Posterior vena cava (tissue), 2 donors: ENCODE measurements at regions of chr3 and their contacts with region 1.

Region 1: DNA sequence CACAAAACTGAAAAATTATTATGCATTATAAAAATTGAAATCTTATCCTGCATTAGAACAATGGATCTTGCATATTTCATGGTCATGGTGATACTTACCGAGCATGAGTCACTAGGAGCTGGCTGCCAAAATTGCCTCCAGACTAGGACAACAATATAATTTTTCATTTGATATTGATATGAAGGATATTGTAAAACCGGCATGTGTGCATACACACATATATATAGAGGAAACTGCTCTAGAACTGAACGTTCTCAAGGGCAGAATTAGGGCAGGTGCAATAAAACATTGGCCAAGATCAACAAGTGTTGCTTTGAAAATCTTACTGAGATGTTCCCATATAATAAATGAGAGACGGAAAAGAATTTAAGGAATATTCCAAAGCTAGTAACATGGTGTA is 319.4 kb upstream of the POU1F1 start:
- DNase-seq: no peak

Region 2: GRCh38 chr3:87621667-87622066 is 25.9 kb after region 1 on chr3:
- intact Hi-C with region 1: no loop called
- DNase-seq: no peak

Region 3: DNA sequence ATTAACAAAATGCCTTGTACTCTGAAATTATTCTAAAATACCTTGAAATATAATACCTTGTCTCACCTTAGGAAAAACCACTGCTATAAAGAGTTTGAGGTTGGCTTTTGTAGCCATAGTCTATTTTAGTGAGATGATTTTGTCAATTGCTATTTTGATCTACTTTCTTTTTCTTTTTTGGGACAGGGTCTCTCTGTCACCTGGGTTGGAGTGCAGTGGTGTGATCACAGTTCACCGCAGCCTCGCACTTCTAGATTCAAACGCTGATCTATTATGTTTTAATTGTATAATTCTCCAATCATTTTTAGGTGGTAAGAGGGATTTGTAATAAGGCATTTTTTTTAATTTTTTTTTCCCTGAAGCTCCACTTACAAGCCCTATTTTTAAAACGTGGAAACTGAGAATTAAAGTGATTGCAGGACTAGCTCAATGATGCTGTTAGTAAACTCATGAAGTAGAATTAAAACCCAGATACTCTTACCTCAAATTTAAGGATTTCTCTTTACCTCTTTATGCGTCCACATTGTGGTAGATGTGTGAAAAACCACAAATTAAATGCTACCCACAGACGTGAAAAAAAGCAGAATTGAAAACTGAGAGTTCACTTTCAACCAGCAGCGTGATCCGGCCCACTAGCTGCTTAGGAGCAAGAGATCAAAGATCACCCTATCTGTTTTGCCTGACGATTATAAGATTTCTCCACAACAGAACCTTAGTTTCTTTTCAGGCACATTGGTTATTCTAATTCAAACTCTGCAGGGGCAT is 78.8 kb after region 1 on chr3:
- intact Hi-C with region 1: no loop called
- DNase-seq: no peak

Region 4: GRCh38 chr3:87848003-87848402 is 252.2 kb after region 1 on chr3:
- intact Hi-C with region 1: no loop called
- DNase-seq: no peak

Region 5: DNA sequence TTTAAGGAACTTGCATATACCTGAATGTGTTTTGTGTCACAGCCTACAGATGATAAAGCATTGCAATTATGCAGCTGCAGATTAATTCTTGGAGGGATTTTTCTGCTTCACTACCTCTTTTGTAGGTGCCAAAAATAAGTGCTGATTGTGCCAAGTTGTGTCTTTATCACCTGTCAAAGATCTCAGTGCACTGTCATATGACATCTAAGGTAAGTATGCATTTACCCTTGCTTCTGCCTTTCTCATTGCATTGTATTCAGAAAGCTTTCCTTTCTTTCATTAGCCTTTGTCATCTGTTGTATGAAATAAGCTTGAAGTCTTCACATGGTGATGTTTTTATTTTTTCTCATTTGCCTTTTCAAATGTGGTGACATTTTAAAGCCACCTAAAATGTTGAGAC is 1129.6 kb after region 1 on chr3:
- intact Hi-C with region 1: no loop called
- DNase-seq: no peak

Region 6: GRCh38 chr3:89032346-89033013 is 1436.7 kb after region 1 on chr3:
- intact Hi-C with region 1: loop called in 1 of 2 experiments (anchors 10 kb)
- DNase-seq: no peak